Psoas muscle (tissue), 8 donors: ENCODE measurements at regions of chr12 and their contacts with region 1.

Region 1: DNA sequence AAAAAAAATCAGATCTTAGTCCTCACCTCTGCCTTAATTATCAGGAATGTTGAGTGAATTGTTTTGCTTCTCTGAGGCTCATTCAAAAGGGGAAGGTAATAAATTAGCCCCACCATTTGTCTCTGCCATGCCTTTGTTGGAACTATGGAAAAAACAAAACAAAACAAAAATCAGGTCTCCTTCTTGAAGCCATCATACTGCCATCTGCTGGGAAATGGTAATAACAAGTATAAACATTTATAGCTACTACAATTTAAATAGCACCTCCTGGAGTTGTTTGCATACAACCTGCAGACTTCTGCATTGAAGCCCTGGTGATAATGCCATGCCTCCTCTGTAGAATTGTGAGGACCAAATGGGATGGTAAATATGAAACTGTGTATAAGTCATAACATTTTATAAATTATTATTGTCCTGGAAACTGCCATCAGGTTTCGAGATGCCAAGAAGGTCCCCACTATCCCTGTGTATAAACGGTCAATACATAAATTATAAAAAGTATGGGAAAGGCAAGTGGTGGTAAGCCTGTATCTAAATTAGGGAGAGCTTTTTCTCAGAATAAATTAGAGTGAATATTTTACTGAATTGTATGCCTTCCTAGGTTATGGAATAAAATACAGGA is 87.2 kb upstream of the FGD4 start:
- DNase-seq: no peak
- ATAC-seq: peak in 1 of 4 donors; percentile 45
- H3K4me3 ChIP-seq: no peak overlapping the region
- H3K27ac ChIP-seq: no peak overlapping the region
- H3K4me1 ChIP-seq: no peaks in the 10 kb centered on the region
- H3K27me3 ChIP-seq: no peaks in the 10 kb centered on the region
- CTCF ChIP-seq: peak; percentile 43

Region 2: GRCh38 chr12:31651893-31652521 is 660.2 kb before region 1 on chr12:
- intact Hi-C with region 1: loop called (anchors 2 to 10 kb)
- DNase-seq: no peak
- ATAC-seq: no peak
- H3K4me3 ChIP-seq: no peak overlapping the region
- H3K27ac ChIP-seq: no peak overlapping the region
- H3K4me1 ChIP-seq: no peaks in the 10 kb centered on the region
- H3K27me3 ChIP-seq: peaks cover 0 to 2% (median 0%) of the 10 kb centered on the region in 3 donors
- CTCF ChIP-seq: no peak

Region 3: DNA sequence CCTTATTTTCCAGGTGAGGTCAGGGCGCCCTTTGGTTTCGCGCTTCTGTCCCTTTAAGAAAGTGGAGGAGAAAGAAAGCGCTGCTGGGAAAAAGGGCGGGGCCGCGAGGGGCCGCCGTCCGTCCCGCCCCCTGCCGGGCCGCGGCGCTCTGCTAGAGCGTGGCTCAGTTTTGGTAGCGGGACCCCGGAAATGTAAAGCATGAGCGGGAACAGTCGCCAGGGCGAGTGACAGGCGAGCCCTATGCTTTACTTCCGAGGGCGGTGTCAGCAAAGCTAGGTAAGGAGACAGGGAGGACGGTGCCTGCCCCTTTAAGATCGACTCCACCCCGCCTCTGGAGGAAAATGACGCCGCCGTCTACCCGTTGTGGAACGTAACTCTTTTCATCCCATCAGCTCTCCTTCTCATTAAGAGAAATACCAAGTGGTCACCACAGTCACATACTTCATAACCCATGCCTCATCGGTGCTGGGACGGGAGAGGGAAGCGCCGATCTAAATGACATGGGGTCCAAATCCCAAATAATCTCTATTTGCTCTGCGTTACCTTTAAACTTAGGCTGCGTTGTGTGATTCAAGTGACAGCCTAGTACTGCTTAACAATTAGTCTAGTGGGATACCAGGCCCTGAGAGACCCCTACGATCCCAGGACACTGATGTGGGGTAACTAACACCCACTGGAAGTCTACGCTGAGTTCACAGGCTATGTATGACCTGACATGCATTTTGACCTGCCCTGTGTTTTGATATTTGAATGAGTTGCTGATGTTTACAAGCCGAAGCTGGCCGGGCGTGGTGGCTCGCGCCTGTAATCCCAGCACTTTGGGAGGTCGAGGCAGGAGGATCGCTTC is 652.9 kb before region 1 on chr12 and contains the start of gene ETFBKMT:
- intact Hi-C with region 1: loop called in 1 of 2 experiments (anchors 10 kb)
- DNase-seq: peak; percentile 84 to 91
- ATAC-seq: peak; percentile 94 to 96 (median 94)
- H3K4me3 ChIP-seq: peak within 1 kb of the TSS; percentile 68
- H3K27ac ChIP-seq: peak within 1 kb of the TSS; percentile 94
- H3K4me1 ChIP-seq: peaks cover 4% of the 10 kb centered on the region
- H3K27me3 ChIP-seq: no peaks in the 10 kb centered on the region
- CTCF ChIP-seq: peak; percentile 35
- total RNA-seq, gene ETFBKMT: 5.0 to 7.3 (median 5.6) TPM

Region 4: DNA sequence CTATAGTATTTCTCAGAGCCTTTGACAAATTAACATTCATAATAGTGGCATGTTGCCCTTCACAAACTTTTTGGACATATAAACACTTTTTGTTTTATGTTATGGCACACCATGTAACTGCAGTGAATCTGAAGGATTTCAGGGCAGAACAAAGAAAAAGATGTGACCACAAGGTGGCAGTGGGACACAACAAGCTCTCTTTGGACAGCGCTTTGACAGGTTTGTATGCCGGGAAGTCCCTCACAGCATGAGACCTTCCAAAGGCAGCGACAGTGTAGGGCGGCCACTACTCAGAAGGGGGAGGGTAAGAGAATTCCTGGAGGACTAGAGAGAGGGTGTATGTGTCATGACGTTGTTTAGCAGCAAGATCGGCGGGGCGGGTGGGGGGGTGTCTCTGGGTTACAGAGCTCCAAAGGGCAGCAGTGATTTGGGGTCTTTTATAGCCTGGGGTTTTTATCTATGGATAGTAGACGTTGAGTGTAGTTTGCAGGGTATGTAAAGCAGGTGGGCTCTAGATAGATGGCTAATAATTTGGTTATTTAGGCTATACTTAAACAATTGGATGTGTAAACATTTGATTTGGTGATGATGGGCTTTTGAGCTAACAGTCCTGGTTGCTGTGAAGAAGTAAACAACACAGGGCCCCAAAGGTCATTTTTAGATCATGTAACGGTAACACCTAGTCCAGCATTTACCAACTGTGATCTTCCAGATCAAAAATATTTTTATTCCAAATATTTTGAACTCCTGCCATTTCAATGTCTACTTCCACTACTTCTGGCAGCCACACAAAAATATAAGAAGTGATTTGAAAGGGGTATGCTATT is 629.8 kb before region 1 on chr12:
- intact Hi-C with region 1: loop called in 1 of 2 experiments (anchors 10 kb)
- DNase-seq: no peak
- ATAC-seq: peak in 3 of 4 donors; percentile 38 to 59 (median 53)
- H3K4me3 ChIP-seq: no peak overlapping the region
- H3K27ac ChIP-seq: no peak overlapping the region
- H3K4me1 ChIP-seq: no peaks in the 10 kb centered on the region
- H3K27me3 ChIP-seq: no peaks in the 10 kb centered on the region
- CTCF ChIP-seq: peak; percentile 50

Region 5: GRCh38 chr12:32062881-32063280 is 249.3 kb before region 1 on chr12:
- intact Hi-C with region 1: loop called in 1 of 2 experiments (anchors 5 kb)
- DNase-seq: no peak
- ATAC-seq: no peak
- H3K4me3 ChIP-seq: no peak overlapping the region
- H3K27ac ChIP-seq: no peak overlapping the region
- H3K4me1 ChIP-seq: no peaks in the 10 kb centered on the region
- H3K27me3 ChIP-seq: no peaks in the 10 kb centered on the region
- CTCF ChIP-seq: no peak

Region 6: DNA sequence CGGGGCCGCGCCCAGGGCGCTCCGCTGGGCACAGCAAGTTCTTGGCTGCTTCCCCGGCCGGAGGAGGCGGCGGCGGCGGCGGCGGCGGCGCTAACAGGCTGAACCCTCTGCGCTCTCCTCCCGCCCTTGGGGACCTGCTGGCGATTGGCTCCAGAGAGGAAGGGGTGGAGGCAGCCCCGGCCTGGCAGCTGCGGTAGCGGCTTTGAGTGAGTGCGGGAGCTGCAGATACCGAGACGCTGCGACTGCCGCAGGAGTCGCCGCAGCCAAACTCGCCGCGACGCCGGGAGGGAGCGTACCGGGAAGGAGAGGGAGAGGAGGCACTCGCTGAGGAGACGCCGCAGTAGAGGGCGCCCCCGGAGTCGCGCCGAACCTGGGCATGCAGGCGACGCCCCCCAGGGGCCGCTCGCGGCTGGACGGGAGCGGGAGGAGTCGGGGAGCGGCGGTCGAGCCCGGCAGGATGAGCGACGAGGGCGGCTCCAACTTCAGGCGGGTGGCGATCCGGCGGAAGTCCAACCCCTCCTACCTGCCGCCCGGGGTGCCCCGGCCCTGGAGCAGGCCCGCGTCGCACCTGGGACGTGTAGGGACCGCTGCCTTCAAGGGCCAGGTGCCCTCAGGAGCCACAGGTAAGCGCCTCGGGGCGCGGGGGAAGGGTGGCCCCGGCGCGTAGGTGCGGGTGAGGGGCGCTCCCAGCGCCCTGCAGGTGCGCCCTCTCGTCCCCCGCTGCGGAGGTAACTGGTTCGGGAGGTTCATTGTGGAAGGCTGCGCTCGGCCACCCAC is 87.4 kb after region 1 on chr12 and contains the start of gene FGD4:
- intact Hi-C with region 1: no loop called
- DNase-seq: peak; percentile 86 to 94
- ATAC-seq: peak; percentile 94 to 98 (median 98)
- H3K4me3 ChIP-seq: peak within 1 kb of the TSS; percentile 81
- H3K27ac ChIP-seq: peak within 1 kb of the TSS; percentile 19
- H3K4me1 ChIP-seq: peaks cover 5% of the 10 kb centered on the region
- H3K27me3 ChIP-seq: no peaks in the 10 kb centered on the region
- CTCF ChIP-seq: peak; percentile 35
- total RNA-seq, gene FGD4: 9.8 to 20.8 (median 17.5) TPM

Region 7: DNA sequence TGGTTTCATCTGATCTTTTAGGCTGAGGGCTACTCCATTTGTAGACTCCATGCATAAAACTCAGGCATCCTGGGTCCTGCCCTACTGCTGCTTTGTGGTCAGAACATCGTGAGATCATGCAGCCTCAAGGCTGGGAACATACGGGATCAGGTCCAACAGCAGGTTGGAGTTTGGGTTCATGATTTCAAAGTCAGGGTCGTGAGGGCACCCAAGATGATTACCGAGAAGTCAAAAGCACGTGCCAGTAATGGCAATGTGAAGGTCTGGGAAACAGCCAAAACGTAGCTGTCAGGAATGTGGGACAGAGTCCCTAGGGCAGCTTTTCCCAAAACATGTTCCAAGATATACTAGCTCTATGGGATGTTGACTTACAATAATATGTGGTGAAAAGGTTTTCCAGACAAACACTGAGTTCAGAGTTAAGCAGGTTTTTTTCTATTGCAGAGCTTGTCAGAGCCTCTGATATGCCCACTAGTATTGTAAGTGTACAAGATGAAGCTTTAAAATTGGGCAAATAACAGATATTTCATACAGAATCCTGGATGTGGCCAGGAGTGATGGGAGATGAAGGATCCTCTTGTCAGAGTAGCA is 236.6 kb after region 1 on chr12:
- intact Hi-C with region 1: no loop called
- DNase-seq: peak in 1 of 2 donors; percentile 28
- ATAC-seq: peak; percentile 52 to 77 (median 64)
- H3K4me3 ChIP-seq: peak overlapping the region; percentile 40
- H3K27ac ChIP-seq: peak overlapping the region; percentile 73
- H3K4me1 ChIP-seq: peaks cover 62% of the 10 kb centered on the region
- H3K27me3 ChIP-seq: no peaks in the 10 kb centered on the region
- CTCF ChIP-seq: no peak